ENCODE measurements at regions of chr15 and their contacts with region 1.

Region 1: GRCh38 chr15:40274350-40275274 is 8.3 kb downstream of the ANKRD63 start:
- DNase-seq: peak; percentile 80
- H3K4me3 Mint-ChIP-seq: no peak overlapping the region
- H3K27ac Mint-ChIP-seq: no peak overlapping the region
- H3K4me1 Mint-ChIP-seq: no peaks in the 10 kb centered on the region
- H3K27me3 Mint-ChIP-seq: no peaks in the 10 kb centered on the region
- CTCF ChIP-seq: peak; percentile 100

Region 2: DNA sequence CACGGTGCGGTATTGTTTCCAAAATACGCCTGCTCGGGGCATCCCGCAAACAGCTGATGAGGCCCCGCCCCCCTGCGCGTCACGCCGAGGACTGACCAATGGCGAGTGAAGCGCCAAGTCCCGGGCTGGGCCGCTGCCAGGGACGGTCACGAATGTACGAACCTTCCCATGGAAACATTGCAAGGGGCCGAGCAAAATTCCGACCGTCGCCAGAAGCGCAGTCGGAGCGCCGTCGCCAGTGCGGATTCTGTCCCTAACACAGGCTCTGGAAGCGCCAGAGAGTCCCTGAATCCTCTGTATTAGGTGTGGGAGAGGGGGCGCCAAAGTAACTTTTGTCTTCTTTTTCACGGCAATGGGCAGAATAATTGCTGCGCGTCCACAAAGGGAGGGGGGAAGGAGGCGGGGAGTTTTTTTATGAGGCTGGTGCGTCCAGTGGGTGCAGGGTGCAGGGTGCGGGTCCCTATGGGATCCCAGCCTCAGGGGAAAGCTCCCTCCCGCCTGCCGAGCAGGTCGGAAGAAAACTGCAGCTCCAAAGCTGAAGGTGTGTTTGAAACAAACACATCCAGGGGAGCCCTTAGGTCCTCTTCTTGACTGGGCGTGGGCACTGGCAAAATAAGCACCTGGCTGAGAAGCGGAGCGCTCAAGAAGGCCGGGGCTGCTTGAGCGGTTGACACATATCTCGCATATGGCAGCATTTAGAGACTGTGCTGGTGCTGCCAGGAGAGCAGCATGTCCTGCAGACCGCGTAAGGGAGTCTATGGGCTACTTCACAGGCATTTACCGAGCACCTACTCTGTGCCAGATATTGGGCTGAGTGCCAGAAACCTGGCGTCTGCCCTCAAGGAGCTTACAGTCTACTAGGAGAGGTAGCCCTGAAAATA is 165.5 kb before region 1 on chr15 and contains the start of gene BMF:
- CTCF ChIA-PET with region 1: interaction called, 8 read pairs
- POLR2A ChIA-PET with region 1: no interaction called
- intact Hi-C with region 1: loop called (anchors 10 kb)
- DNase-seq: peak; percentile 98
- H3K4me3 Mint-ChIP-seq: peak within 1 kb of the TSS; percentile 89
- H3K27ac Mint-ChIP-seq: peak within 1 kb of the TSS; percentile 46
- H3K4me1 Mint-ChIP-seq: peaks cover 37% of the 10 kb centered on the region
- H3K27me3 Mint-ChIP-seq: no peaks in the 10 kb centered on the region
- CTCF ChIP-seq: peak; percentile 23
- total RNA-seq, gene BMF: 0.17 TPM in 1 of 2 replicates, not detected in the other

Region 3: GRCh38 chr15:40232625-40233070 is 42.0 kb before region 1 on chr15:
- CTCF ChIA-PET with region 1: interaction called, 127 read pairs
- POLR2A ChIA-PET with region 1: no interaction called
- intact Hi-C with region 1: no loop called
- DNase-seq: peak; percentile 51
- H3K4me3 Mint-ChIP-seq: no peak overlapping the region
- H3K27ac Mint-ChIP-seq: peak overlapping the region; percentile 54
- H3K4me1 Mint-ChIP-seq: peaks cover 13% of the 10 kb centered on the region
- H3K27me3 Mint-ChIP-seq: no peaks in the 10 kb centered on the region
- CTCF ChIP-seq: no peak

Region 4: DNA sequence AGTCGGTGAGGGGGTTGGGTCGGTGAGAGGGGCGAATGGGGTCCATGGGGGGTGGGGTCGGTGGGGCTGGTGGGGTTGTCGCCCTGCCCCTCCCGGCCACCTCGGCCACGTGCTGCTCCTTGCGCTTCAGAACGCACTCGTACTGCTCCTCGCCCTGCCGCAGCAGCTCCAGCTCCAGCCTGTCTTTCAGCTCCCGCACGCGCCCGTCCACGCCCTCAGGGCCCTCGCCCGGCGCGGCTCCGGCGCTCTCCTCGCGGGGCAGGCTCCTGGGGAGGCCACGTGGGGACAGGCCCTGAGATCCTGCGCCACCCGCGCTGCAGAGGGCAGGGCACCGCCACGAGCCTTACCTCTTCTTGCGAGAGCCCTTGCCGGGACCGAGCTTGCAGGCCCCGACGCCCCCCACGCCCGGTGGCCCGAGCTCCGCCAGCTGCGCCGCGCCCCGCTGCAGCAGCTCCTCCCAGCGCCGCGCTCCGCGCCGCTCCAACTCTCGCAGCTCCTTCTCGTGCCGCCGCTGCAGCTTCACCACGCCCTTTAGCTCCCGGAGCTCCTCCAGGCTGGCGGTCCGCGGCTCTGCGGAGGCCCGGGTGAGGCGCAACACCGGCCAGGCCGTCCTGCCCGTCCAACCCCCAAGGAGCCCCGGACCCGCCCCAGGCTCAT is 16.4 kb after region 1 on chr15:
- CTCF ChIA-PET with region 1: interaction called, 101 read pairs
- POLR2A ChIA-PET with region 1: no interaction called
- intact Hi-C with region 1: no loop called
- DNase-seq: peak; percentile 63
- H3K4me3 Mint-ChIP-seq: peak overlapping the region; percentile 62
- H3K27ac Mint-ChIP-seq: no peak overlapping the region
- H3K4me1 Mint-ChIP-seq: peaks cover 4% of the 10 kb centered on the region
- H3K27me3 Mint-ChIP-seq: peaks cover 10% of the 10 kb centered on the region
- CTCF ChIP-seq: no peak

Region 5: DNA sequence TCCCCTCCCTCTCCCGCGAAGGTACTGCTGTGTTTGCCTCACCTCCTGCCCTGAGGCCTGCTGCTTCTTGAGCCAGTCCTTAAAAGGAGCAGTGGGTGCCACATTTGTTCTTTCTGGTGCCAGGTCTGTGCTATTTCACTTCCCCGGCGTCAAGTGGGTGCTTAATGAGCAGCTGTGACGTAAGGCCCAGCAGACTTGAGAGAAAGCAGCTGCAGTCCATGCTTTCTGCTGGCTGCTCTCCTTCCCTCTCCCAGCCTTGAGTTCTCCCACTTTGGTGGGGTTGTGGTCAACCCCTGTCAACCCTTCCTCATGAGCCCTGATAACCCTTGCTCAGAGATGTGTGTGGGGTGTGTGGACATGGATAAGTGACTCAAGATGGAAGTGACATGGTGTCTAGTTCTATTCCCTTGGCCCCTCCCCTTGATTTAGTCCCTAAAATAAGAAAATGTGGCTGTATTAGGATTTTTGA is 55.8 kb after region 1 on chr15:
- CTCF ChIA-PET with region 1: interaction called, 179 read pairs
- POLR2A ChIA-PET with region 1: no interaction called
- intact Hi-C with region 1: no loop called
- DNase-seq: no peak
- H3K4me3 Mint-ChIP-seq: no peak overlapping the region
- H3K27ac Mint-ChIP-seq: no peak overlapping the region
- H3K4me1 Mint-ChIP-seq: peaks cover 39% of the 10 kb centered on the region
- H3K27me3 Mint-ChIP-seq: no peaks in the 10 kb centered on the region
- CTCF ChIP-seq: no peak

Region 6: GRCh38 chr15:40405501-40406381 is 131.1 kb after region 1 on chr15 and contains the start of gene IVD:
- CTCF ChIA-PET with region 1: interaction called, 16 read pairs
- POLR2A ChIA-PET with region 1: interaction called, 3 read pairs
- intact Hi-C with region 1: no loop called
- DNase-seq: peak; percentile 94
- H3K4me3 Mint-ChIP-seq: peak within 1 kb of the TSS; percentile 83
- H3K27ac Mint-ChIP-seq: peak within 1 kb of the TSS; percentile 64
- H3K4me1 Mint-ChIP-seq: peaks cover 6% of the 10 kb centered on the region
- H3K27me3 Mint-ChIP-seq: no peaks in the 10 kb centered on the region
- CTCF ChIP-seq: no peak
- total RNA-seq, gene IVD: 53.8 and 61.6 TPM in 2 replicates

Measured in MCF 10A (cell line).